Right cardiac atrium (tissue), 5 donors: ENCODE measurements at regions of chr1 and their contacts with region 1.

Region 1: DNA sequence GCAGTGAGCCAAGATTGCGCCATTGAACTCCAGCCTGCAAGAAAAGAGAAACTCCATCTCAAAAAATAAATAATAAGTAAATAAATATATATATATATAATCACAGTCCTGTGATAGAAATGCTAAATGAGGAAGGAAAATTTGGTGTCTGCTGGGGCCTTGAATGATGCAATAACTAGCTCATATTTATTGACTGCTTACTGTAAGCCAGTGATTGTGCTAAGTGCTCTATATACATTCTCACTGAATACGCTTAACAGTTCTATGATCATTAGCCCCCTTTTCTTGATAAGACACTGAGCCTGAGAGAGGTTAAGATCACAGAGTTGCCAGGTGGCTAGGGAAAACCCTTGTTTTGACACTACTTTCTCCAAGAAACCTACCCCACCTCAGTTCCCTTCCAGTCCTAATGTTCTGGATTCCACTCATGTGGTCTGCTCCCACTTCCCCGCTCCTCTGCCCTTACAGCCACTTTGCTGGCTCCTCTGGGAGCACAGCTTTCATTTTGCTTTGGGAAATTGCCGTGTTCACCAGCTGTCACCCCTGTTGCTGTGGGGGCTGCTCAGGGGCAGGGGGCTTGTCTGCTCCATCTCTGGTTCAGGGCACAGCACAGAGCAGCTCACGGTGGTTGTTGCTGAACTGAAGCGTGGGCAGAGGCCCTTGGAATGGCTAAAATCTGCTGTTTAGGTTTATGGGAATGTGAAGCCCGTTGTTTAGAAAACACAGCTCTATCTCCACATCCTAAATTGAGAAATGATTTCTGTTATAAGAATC is 2.5 kb upstream of the BMP8A start:
- DNase-seq: no peak
- ATAC-seq: no peak
- H3K4me3 ChIP-seq: no peak overlapping the region
- H3K27ac ChIP-seq: no peak overlapping the region
- H3K4me1 ChIP-seq: peaks cover 7% of the 10 kb centered on the region
- H3K27me3 ChIP-seq: no peaks in the 10 kb centered on the region

Region 2: DNA sequence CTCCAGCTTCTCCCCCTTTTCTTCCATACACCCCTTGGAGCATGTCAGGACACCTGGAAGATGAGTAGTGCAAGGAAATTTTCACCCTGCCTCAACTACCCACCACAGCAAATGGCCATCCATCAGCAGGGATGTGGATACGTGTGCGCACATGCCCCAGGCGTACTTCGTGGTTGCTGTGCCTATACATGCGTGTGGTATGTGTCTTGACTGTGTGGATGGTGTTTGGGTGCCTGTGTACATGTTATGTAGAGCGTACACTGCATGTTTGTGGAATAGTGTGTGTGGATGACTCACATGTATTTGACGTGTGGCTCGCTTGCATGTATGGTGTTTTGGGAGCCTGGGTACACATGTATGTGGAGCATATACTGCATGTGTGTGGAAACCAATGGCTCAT is 787.9 kb before region 1 on chr1:
- intact Hi-C with region 1: no loop called
- DNase-seq: no peak
- ATAC-seq: no peak
- H3K4me3 ChIP-seq: no peak overlapping the region
- H3K27ac ChIP-seq: no peak overlapping the region
- H3K4me1 ChIP-seq: no peaks in the 10 kb centered on the region
- H3K27me3 ChIP-seq: no peaks in the 10 kb centered on the region

Region 3: DNA sequence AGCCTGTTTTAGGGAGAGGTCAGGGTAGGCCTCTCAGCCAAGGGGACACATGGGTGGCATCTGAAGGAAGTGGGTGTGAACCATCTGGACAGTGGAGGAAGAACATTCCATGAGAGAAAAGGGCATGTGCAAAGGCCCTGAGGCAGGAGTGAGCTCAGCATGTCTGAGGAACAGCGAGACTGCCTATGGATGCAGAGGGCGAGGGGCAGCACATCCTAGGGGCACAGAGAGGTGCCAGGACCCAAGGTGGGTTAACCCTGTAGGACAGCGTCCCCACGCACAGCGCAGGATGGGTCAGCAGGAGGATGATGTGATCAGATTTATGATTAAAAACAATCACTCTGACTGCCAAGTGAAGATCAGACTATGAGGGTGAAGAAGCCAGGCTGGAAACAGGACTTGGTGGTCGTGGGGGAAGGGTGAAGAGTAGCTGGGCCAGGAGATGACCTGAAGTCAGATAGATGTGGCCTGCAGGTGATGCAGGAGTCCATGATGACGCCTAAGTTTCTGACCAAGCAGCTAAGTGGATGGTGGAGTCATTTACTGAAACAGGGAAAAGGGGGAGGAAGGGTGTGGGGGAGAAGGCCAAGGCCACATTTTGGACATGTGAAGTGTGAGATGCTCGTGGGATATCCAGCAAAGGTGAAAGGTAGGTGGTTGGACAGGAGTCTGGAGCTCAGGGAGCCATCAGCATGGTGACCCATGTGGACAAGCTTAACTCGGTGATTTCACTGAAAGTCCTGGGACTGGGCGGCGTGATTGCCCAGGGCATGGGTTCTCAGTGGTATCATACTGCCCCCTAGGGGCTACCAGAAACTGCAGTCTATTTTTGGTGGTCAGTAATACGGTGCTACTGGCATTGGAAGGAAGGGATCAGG is 49.8 kb after region 1 on chr1:
- intact Hi-C with region 1: loop called in 1 of 4 experiments (anchors 10 kb)
- DNase-seq: peak; percentile 69 to 84 (median 83)
- ATAC-seq: peak; percentile 85 to 88
- H3K4me3 ChIP-seq: no peak overlapping the region
- H3K27ac ChIP-seq: no peak overlapping the region
- H3K4me1 ChIP-seq: no peaks in the 10 kb centered on the region
- H3K27me3 ChIP-seq: no peaks in the 10 kb centered on the region

Region 4: DNA sequence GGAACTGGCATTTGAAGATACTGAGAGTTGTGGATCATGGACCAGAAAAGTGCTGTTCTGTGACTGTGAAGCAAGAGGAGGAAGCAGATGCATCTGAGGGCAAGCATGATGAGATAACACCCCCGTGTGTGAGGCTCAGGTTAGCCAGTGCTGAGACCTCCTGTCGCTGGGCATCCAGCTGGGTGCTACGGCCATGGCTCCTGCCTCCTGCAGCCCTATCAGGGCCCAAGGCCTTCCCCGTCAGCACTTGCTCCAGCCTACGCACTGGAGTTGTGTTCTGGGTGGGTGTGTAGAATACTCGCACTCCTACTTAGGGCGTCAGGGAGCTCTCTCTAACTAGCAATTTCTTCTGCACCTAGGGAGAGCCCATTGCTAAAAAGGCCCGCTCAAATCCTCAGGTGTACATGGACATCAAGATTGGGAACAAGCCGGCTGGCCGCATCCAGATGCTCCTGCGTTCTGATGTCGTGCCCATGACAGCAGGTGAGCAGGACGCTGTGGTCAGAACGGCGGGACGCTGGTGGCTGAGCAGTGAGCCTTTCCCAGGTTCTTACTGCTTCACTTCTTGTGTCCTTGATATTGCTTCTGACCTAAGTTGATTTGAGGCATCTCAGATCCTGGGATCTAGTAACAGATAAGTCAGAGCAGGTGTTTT is 256.2 kb after region 1 on chr1:
- intact Hi-C with region 1: no loop called
- DNase-seq: no peak
- ATAC-seq: no peak
- H3K4me3 ChIP-seq: no peak overlapping the region
- H3K27ac ChIP-seq: no peak overlapping the region
- H3K4me1 ChIP-seq: no peaks in the 10 kb centered on the region
- H3K27me3 ChIP-seq: no peaks in the 10 kb centered on the region